ENCODE measurements at regions of chr4 and their contacts with region 1.

Region 1: GRCh38 chr4:2220016-2220630 is 21.8 kb downstream of the HAUS3 start:
- DNase-seq: peak; percentile 65 to 83 (median 68)
- H3K4me3 ChIP-seq: no peak overlapping the region
- H3K4me3 Mint-ChIP-seq: peak overlapping the region in 1 of 7 donors; percentile 42
- H3K27ac ChIP-seq: no peak overlapping the region
- H3K27ac Mint-ChIP-seq: peak overlapping the region in 5 of 8 donors; percentile 25 to 86 (median 70)
- H3K4me1 ChIP-seq: no peaks in the 10 kb centered on the region
- H3K4me1 Mint-ChIP-seq: peaks cover 6% of the 10 kb centered on the region in 3 donors
- H3K27me3 ChIP-seq: no peaks in the 10 kb centered on the region
- H3K27me3 Mint-ChIP-seq: peaks cover 0 to 2% of the 10 kb centered on the region in 2 donors

Region 2: GRCh38 chr4:2241410-2242353 is 21.6 kb after region 1 on chr4 and contains the starts of genes HAUS3 and POLN:
- CTCF ChIA-PET with region 1: interaction called, 17 read pairs
- POLR2A ChIA-PET with region 1: no interaction called
- DNase-seq: peak; percentile 99 to 100 (median 99)
- H3K4me3 ChIP-seq: peak within 1 kb of the TSS; percentile 81
- H3K4me3 Mint-ChIP-seq: peak within 1 kb of the TSS; percentile 88 to 95 (median 93)
- H3K27ac ChIP-seq: peak within 1 kb of the TSS; percentile 89
- H3K27ac Mint-ChIP-seq: peak within 1 kb of the TSS; percentile 90 to 98 (median 93)
- H3K4me1 ChIP-seq: peaks cover 39% of the 10 kb centered on the region
- H3K4me1 Mint-ChIP-seq: peaks cover 56 to 73% (median 66%) of the 10 kb centered on the region in 3 donors
- H3K27me3 ChIP-seq: no peaks in the 10 kb centered on the region
- H3K27me3 Mint-ChIP-seq: no peaks in the 10 kb centered on the region
- total RNA-seq, gene HAUS3: 23.8 to 23.9 TPM
- total RNA-seq, gene POLN: 1.5 to 1.6 TPM

Region 3: DNA sequence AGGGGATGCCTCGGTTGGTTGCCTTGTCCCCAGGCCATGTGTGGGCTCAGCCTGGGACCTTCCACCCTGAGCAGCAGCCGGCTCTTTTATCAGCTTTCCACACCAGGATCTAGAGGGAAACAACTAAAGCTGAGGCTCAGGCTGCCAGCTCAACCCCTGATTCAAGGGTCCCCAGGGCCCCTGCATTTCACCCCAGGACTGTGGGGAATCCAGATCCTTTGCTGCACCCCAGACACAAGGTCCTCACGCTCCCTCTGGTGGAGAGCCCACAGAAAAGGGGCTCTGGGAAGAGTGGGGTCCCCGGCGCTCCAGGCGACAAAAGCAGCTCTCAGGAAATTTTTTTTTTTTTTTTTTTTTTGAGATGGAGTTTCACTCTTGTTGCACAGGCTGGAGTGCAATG is 134.0 kb after region 1 on chr4:
- CTCF ChIA-PET with region 1: interaction called, 11 read pairs
- POLR2A ChIA-PET with region 1: no interaction called
- DNase-seq: peak in 3 of 5 donors; percentile 14 to 62 (median 44)
- H3K4me3 ChIP-seq: no peak overlapping the region
- H3K4me3 Mint-ChIP-seq: no peak overlapping the region
- H3K27ac ChIP-seq: no peak overlapping the region
- H3K27ac Mint-ChIP-seq: no peak overlapping the region
- H3K4me1 ChIP-seq: no peaks in the 10 kb centered on the region
- H3K4me1 Mint-ChIP-seq: peaks cover 6 to 13% (median 9%) of the 10 kb centered on the region in 3 donors
- H3K27me3 ChIP-seq: no peaks in the 10 kb centered on the region
- H3K27me3 Mint-ChIP-seq: no peaks in the 10 kb centered on the region

Region 4: GRCh38 chr4:2402029-2402428 is 181.9 kb after region 1 on chr4:
- CTCF ChIA-PET with region 1: interaction called, 10 read pairs
- POLR2A ChIA-PET with region 1: no interaction called
- DNase-seq: no peak
- H3K4me3 ChIP-seq: peak overlapping the region; percentile 35
- H3K4me3 Mint-ChIP-seq: peak overlapping the region; percentile 37 to 87 (median 73)
- H3K27ac ChIP-seq: peak overlapping the region; percentile 33
- H3K27ac Mint-ChIP-seq: peak overlapping the region in 4 of 8 donors; percentile 42 to 81 (median 64)
- H3K4me1 ChIP-seq: peaks cover 21% of the 10 kb centered on the region
- H3K4me1 Mint-ChIP-seq: peaks cover 38 to 62% (median 50%) of the 10 kb centered on the region in 3 donors
- H3K27me3 ChIP-seq: no peaks in the 10 kb centered on the region
- H3K27me3 Mint-ChIP-seq: peaks cover 0 to 5% of the 10 kb centered on the region in 2 donors

Region 5: GRCh38 chr4:2412885-2413716 is 193.0 kb after region 1 on chr4:
- CTCF ChIA-PET with region 1: interaction called, 14 read pairs
- POLR2A ChIA-PET with region 1: no interaction called
- DNase-seq: peak; percentile 85 to 97 (median 92)
- H3K4me3 ChIP-seq: peak overlapping the region; percentile 48
- H3K4me3 Mint-ChIP-seq: peak overlapping the region; percentile 74 to 85 (median 78)
- H3K27ac ChIP-seq: peak overlapping the region; percentile 95
- H3K27ac Mint-ChIP-seq: peak overlapping the region; percentile 93 to 100 (median 98)
- H3K4me1 ChIP-seq: peaks cover 72% of the 10 kb centered on the region
- H3K4me1 Mint-ChIP-seq: peaks cover 60 to 88% (median 71%) of the 10 kb centered on the region in 3 donors
- H3K27me3 ChIP-seq: no peaks in the 10 kb centered on the region
- H3K27me3 Mint-ChIP-seq: peaks cover 0 to 6% of the 10 kb centered on the region in 2 donors

Region 6: DNA sequence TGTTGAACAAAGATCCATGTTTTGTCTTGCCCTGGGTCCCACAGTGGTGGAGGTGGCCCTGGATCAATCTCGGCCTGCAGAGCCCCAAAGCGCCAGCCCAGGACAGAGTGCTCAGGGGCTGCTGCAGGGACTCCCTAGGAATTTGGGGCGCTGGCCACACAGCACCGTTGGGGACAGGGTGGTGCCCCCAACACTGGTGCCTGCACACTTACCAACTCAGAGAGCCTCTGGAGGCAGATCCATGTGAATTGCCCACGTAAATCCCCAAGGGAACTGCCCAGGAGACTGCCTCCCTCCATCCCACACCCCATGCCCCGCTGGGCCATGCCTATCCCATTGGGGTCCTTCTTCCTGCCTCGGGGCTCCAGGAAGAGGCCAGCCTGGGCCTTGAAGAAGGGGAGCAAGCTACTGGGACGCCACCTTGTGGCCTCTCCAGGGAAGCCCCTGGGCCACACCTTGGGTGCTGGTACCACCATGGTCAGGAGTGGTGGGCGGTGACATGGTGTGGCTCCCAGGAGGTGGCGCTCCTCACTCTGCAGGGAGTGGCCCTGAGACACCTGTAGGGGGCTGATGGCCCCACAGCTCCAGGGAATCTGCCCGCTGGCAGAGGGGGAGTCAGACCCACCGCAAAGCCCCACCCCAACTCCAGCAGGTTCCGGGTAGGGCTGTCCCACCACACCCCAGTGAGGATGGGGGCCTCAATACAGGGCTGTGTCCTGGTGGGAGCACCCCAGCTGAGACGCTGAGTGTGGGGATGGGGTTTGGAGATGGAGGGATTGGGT is 221.5 kb after region 1 on chr4:
- CTCF ChIA-PET with region 1: interaction called, 39 read pairs
- POLR2A ChIA-PET with region 1: interaction called, 7 read pairs
- DNase-seq: peak; percentile 58 to 82 (median 66)
- H3K4me3 ChIP-seq: no peak overlapping the region
- H3K4me3 Mint-ChIP-seq: peak overlapping the region in 1 of 7 donors; percentile 80
- H3K27ac ChIP-seq: no peak overlapping the region
- H3K27ac Mint-ChIP-seq: peak overlapping the region in 2 of 8 donors; percentile 15 to 89
- H3K4me1 ChIP-seq: peaks cover 3% of the 10 kb centered on the region
- H3K4me1 Mint-ChIP-seq: peaks cover 0 to 4% (median 2%) of the 10 kb centered on the region in 3 donors
- H3K27me3 ChIP-seq: no peaks in the 10 kb centered on the region
- H3K27me3 Mint-ChIP-seq: no peaks in the 10 kb centered on the region

Region 7: DNA sequence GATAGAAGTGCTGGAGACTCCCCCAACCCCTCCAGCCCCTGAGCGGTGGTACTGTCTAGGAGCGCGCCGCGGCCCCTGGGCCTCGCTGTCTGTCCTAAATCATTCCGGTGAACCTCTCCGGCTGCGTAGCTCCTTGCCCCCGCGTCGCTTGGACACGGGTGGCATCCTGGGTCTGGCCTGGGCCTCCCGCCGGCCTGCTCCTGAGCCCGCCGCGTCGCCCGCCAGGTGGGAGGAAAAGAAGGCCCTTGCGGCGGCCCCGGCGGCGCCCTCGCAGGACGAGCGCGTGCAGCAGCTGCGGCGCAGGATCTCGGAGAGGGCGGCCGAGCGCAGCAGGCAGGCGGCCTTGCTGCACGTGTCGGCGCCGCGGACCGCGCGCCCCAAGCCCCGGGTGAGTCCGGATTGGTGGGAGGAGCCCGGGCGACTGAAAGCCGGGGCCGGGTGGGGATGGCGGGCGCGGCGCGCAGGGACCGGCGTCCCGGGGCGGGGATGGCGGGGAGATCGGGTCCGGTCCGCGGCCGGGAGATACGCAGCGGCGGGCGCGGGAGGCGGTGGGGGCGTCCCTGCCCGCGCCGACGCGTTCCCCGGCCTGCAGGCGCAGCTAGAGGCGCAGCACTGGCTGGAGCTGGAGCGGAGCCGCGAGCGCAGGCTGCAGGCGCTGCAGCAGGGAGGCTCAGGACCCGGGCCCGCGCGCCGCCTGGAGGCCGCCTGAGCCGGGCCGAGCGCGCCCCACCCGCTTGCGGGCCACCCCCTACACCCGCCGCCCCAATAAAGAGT is 242.3 kb after region 1 on chr4:
- CTCF ChIA-PET with region 1: interaction called, 20 read pairs
- POLR2A ChIA-PET with region 1: no interaction called
- DNase-seq: peak; percentile 52 to 75 (median 63)
- H3K4me3 ChIP-seq: no peak overlapping the region
- H3K4me3 Mint-ChIP-seq: peak overlapping the region; percentile 67 to 91 (median 75)
- H3K27ac ChIP-seq: no peak overlapping the region
- H3K27ac Mint-ChIP-seq: peak overlapping the region in 2 of 8 donors; percentile 38 to 80
- H3K4me1 ChIP-seq: peaks cover 8% of the 10 kb centered on the region
- H3K4me1 Mint-ChIP-seq: peaks cover 6 to 16% (median 15%) of the 10 kb centered on the region in 3 donors
- H3K27me3 ChIP-seq: no peaks in the 10 kb centered on the region
- H3K27me3 Mint-ChIP-seq: peaks cover 0 to 3% of the 10 kb centered on the region in 2 donors

Measured in CD8-positive, alpha-beta memory T cell (primary cell).